ENCODE measurements at regions of chr9 and their contacts with region 1.

Region 1: DNA sequence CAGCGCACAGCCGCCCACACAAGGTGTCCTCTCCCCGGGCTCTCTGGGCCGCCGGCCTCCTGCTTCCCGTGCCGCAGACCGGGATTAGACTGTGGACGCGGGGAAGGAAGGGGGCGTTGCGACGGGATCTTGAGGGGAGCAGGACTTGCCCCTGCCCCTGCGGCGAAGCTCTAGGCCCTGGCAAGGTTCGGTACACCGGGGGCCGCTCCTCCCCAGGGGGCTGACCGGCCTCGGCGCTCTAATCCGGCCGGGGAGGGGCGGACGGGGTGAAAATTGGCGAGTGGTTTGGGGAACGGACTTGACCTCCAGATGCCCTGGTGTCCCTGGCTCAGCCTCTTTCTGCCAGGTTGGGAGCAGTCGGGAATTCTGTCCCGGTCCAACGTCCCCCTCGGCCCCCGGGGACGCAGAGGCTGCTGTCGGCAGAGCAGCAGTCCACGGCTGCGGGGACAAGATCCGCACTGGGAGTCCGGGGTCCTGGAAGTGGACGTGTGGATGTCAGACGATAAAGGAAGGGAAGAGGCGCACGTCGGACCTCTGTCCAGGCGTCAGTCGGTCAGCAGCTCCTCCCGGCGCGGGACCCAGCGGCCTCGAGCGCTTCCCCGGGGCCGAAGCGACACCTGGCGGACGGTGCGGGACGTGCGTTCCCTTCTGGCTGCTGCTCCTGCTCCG is 1.9 kb upstream of the CNTFR start:
- DNase-seq: peak; percentile 44 to 90
- H3K4me3 ChIP-seq: peak overlapping the region; percentile 46 to 72
- H3K27ac ChIP-seq: peak overlapping the region; percentile 26 to 39
- H3K4me1 ChIP-seq: peaks cover 6 to 42% of the 10 kb centered on the region in 2 donors
- H3K27me3 ChIP-seq: peaks cover 7% of the 10 kb centered on the region
- CTCF ChIP-seq: peak; percentile 86 to 94 (median 93)

Region 2: DNA sequence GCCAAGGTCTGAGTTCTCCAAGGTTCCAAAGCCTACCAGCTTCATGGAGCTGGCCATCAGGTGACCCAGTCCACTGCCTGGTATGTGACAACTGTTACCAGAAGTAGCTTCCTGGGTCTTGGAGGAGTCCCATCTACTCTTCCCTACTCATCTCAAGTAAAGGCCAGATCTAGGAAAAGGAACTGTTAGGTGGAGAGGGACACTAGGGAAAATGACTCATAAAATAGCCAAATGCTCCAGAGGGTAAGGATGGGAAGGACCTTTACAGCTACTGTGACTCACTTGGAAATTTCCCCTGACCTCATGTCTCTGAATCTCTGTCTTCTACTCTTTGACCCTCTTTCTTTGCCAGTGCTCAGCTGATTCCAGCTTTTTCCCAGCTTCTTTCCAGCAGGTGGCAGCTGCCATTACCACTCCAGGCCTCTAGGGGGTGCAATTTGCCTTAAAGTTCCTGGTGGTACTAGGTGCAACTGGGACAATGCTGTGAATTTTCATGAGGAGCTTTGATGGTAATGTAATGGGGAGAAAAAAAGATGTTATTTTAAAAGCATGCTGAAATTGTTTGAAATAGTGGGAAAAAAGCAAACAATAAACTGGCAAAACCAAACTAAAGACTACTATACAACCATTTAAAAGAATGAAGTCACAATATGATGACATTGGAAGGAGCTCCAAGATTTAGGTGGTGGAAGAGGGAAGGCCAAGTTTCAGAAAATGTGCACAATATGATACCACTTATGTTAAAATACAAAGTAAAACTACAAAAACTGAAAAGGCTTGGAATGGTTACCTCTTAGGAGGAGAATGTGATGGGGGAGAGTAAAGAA is 187.6 kb before region 1 on chr9:
- intact Hi-C with region 1: loop called (anchors 2 kb)
- DNase-seq: peak in 1 of 2 donors; percentile 81
- H3K4me3 ChIP-seq: no peak overlapping the region
- H3K27ac ChIP-seq: no peak overlapping the region
- H3K4me1 ChIP-seq: no peaks in the 10 kb centered on the region
- H3K27me3 ChIP-seq: no peaks in the 10 kb centered on the region
- CTCF ChIP-seq: peak; percentile 79 to 96 (median 95)

Region 3: DNA sequence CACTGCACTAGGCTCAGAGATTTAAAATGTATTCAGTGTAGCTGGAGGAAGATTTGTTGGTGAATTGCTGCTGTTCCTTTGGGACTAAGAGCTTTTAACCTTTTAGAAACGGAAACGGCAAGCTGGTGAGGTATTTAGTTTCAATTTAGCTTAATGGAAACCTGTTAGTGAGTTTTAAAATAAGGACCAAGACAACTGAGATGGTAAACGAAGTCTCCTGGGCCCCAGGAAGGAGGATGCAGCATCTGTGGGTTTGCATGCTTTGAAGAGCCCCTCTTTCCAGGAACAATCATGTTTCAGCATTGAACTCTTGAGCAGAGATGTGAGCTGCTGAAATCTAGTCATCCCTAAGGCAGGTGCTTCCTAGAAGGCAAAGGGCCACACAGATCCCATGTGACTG is 116.3 kb before region 1 on chr9:
- intact Hi-C with region 1: no loop called
- DNase-seq: no peak
- H3K4me3 ChIP-seq: no peak overlapping the region
- H3K27ac ChIP-seq: no peak overlapping the region
- H3K4me1 ChIP-seq: no peaks in the 10 kb centered on the region
- H3K27me3 ChIP-seq: no peaks in the 10 kb centered on the region
- CTCF ChIP-seq: no peak

Region 4: GRCh38 chr9:34500623-34501267 is 90.6 kb before region 1 on chr9:
- intact Hi-C with region 1: loop called (anchors 5 kb)
- DNase-seq: peak in 1 of 2 donors; percentile 75
- H3K4me3 ChIP-seq: no peak overlapping the region
- H3K27ac ChIP-seq: no peak overlapping the region
- H3K4me1 ChIP-seq: peaks cover 11 to 17% of the 10 kb centered on the region in 2 donors
- H3K27me3 ChIP-seq: no peaks in the 10 kb centered on the region
- CTCF ChIP-seq: peak; percentile 78 to 98 (median 97)

Region 5: DNA sequence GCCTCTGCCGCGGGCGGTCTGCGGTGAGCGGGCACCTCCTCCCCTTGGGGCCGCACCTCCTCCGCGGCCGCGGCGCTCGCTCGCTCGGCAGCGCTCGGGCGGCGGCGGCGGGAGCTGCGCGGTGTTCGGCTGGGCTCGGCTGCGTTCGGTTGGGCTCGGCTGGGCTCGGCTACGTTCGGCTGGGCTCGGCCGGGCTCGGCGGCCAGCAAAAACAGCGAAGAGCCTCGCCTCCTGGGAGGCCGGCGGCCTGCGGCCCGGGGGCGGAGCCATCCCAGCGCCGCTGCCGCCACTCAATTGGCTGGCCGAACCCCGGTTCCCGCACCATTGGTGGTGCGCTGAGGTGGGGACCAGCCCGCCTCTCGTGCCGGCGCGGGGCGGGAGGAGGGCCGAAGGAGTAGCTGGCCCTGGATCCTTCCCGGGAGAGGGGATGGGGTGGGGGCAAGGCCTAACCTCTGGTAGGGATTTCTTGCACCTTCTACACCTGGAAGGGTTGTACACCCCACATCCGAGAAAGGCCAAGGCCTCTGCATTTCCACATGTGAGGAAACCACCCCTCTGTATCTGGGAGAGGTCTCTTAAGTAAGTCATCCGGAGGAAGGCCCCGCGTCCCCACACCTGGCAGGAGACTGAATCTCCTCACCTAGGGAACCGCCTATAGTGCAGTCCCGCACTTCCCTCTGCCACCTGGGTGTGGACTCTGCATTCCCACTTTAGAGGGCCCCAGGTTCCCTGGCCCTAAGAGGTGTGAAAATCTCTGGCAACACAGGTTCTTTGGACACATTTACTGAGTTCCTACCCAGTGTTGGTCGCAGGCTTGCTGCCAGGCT is 68.2 kb before region 1 on chr9 and contains the start of gene ENHO:
- intact Hi-C with region 1: loop called (anchors 1 kb)
- DNase-seq: peak; percentile 26 to 93
- H3K4me3 ChIP-seq: peak within 1 kb of the TSS; percentile 47 to 68
- H3K27ac ChIP-seq: no peak within 1 kb of the TSS
- H3K4me1 ChIP-seq: peaks cover 3 to 5% of the 10 kb centered on the region in 2 donors
- H3K27me3 ChIP-seq: no peaks in the 10 kb centered on the region
- CTCF ChIP-seq: no peak
- total RNA-seq, gene ENHO: not detected

Region 6: GRCh38 chr9:34546834-34547827 is 44.3 kb before region 1 on chr9:
- intact Hi-C with region 1: loop called (anchors 2 kb)
- DNase-seq: peak in 1 of 2 donors; percentile 75
- H3K4me3 ChIP-seq: no peak overlapping the region
- H3K27ac ChIP-seq: no peak overlapping the region
- H3K4me1 ChIP-seq: no peaks in the 10 kb centered on the region
- H3K27me3 ChIP-seq: no peaks in the 10 kb centered on the region
- CTCF ChIP-seq: peak in 2 of 3 experiments; percentile 32 to 51

Region 7: DNA sequence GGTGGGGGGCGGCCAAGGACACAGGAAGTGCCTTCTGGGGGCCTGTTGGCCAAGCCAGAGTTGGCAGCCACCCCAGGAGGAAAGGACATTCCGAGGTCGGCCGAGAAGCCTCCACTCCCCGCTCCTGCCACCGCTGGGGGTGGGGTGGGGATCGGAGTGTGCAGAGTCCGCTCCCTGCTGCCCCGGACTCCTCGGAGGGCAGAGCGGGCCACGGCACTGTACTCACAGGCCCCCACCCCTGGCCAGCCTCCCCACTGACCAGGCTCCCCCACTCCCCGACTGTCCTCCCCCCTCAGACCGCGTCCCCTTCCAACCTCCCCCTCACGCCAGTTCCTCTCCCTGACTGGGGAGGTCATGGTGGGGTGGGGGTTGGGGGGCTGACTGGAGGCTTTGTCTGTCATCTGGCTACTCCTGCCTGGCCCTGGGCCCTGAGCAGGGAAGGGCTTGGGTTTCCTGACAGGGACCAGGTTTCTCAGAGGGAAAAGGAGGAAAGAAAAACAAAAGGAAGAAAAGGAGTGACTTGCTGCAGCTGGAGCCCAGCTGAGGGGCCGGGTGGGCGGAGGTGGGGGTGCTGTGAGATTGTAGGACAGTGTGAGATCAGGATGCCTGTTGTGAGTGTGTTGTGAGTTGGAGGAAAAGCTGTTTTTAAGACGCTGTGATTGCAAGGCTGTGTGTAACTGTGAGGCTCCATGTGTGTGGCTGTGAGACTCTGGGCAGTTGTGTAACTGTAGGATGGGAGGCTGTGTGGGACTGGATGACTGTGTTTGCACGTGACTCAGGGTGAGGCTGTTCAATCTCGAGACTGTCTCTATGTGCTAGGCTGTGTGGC is 31.5 kb before region 1 on chr9:
- intact Hi-C with region 1: no loop called
- DNase-seq: no peak
- H3K4me3 ChIP-seq: no peak overlapping the region
- H3K27ac ChIP-seq: no peak overlapping the region
- H3K4me1 ChIP-seq: no peaks in the 10 kb centered on the region
- H3K27me3 ChIP-seq: no peaks in the 10 kb centered on the region
- CTCF ChIP-seq: no peak

Region 8: GRCh38 chr9:34570376-34570775 is 21.0 kb before region 1 on chr9:
- intact Hi-C with region 1: no loop called
- DNase-seq: no peak
- H3K4me3 ChIP-seq: no peak overlapping the region
- H3K27ac ChIP-seq: no peak overlapping the region
- H3K4me1 ChIP-seq: no peaks in the 10 kb centered on the region
- H3K27me3 ChIP-seq: no peaks in the 10 kb centered on the region
- CTCF ChIP-seq: no peak

Region 9: DNA sequence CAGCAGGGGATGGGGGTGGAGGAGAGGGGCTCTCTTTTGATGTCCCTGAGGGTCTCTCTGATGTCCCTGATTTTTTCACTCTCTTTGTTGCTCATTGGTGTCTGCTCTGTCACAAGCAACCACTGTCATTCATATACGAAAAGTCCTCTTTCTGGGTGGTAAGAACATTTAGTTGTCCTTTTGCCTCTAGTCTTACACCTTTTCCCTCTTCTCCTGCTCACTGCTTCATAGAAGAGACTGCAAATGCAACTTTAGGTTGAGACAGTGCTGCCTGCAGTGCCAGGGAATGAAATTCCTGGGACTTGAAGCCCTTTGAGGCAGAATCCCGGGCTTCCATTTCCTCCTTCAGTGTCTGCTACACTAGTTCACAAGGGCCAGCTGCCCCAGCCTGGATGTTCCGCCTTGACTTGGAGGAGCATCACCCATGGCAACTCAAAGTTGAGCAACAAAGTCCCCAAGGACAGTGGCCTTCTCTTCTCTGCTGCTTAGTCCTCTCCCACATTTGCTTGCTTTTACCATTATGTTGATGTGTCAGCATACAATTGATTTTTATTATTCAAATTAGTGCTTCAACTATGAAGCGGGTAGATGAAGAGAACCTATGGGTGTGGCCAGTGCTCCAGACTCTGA is 803.8 kb after region 1 on chr9:
- intact Hi-C with region 1: no loop called
- DNase-seq: no peak
- H3K4me3 ChIP-seq: no peak overlapping the region
- H3K27ac ChIP-seq: no peak overlapping the region
- H3K4me1 ChIP-seq: no peaks in the 10 kb centered on the region
- H3K27me3 ChIP-seq: no peaks in the 10 kb centered on the region
- CTCF ChIP-seq: no peak